Sciatic nerve (tissue), 2 donors: ENCODE measurements at regions of chr7 and their contacts with region 1.

Region 1: GRCh38 chr7:101294039-101294831 is 27.4 kb downstream of the IFT22 start:
- DNase-seq: no peak
- ATAC-seq: no peak

Region 2: DNA sequence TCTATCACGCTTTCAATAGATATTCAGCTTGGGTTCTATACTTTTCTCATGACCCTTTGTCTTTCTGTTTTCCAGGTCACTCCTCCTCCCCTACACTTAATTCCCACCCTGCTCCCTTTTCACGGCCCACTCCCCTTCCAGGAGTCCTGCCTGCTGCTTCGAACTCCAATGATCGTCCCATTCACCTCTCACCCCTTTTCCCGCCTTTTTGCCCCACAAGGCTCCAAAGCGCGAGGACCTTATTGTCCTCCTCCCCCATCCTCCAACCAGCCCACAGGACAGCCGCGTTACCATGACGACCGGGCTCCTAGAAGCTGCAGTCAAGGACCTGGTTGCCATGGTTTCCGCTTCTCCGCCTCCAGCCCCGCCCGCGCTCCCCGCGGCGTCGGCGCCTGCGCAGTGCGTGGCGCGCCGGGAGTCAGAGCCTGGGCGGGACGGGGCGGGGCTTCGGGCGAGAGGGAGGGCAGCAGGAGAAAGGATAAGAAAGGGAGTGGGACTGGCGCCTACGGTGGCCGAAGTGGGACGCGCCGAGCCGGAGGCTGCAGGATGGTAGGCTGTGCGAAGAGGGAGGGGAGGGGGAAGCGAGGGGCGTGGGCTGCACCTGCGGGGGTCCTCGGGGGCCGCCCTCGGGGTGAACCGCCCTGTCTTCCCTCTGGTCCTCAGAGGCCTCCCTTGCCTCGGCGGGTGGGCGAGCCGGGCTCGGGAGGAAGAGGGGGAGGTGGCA is 140.1 kb before region 1 on chr7 and contains the start of gene AP1S1:
- intact Hi-C with region 1: loop called (anchors 5 kb)
- DNase-seq: peak; percentile 96
- ATAC-seq: peak; percentile 97
- total RNA-seq, gene AP1S1: 22.1 TPM